Psoas muscle (tissue), 8 donors: ENCODE measurements at regions of chr1 and their contacts with region 1.

Region 1: GRCh38 chr1:151443846-151444782 is 15.2 kb downstream of the POGZ start:
- DNase-seq: no peak
- ATAC-seq: peak; percentile 80 to 92 (median 87)
- H3K4me3 ChIP-seq: no peak overlapping the region
- H3K27ac ChIP-seq: peak overlapping the region; percentile 26
- H3K4me1 ChIP-seq: peaks cover 44% of the 10 kb centered on the region
- H3K27me3 ChIP-seq: no peaks in the 10 kb centered on the region
- CTCF ChIP-seq: peak; percentile 69

Region 2: GRCh38 chr1:151292207-151293030 is 151.7 kb before region 1 on chr1:
- intact Hi-C with region 1: no loop called
- DNase-seq: no peak
- ATAC-seq: peak in 2 of 4 donors; percentile 7 to 9
- H3K4me3 ChIP-seq: no peak overlapping the region
- H3K27ac ChIP-seq: no peak overlapping the region
- H3K4me1 ChIP-seq: no peaks in the 10 kb centered on the region
- H3K27me3 ChIP-seq: no peaks in the 10 kb centered on the region
- CTCF ChIP-seq: no peak

Region 3: DNA sequence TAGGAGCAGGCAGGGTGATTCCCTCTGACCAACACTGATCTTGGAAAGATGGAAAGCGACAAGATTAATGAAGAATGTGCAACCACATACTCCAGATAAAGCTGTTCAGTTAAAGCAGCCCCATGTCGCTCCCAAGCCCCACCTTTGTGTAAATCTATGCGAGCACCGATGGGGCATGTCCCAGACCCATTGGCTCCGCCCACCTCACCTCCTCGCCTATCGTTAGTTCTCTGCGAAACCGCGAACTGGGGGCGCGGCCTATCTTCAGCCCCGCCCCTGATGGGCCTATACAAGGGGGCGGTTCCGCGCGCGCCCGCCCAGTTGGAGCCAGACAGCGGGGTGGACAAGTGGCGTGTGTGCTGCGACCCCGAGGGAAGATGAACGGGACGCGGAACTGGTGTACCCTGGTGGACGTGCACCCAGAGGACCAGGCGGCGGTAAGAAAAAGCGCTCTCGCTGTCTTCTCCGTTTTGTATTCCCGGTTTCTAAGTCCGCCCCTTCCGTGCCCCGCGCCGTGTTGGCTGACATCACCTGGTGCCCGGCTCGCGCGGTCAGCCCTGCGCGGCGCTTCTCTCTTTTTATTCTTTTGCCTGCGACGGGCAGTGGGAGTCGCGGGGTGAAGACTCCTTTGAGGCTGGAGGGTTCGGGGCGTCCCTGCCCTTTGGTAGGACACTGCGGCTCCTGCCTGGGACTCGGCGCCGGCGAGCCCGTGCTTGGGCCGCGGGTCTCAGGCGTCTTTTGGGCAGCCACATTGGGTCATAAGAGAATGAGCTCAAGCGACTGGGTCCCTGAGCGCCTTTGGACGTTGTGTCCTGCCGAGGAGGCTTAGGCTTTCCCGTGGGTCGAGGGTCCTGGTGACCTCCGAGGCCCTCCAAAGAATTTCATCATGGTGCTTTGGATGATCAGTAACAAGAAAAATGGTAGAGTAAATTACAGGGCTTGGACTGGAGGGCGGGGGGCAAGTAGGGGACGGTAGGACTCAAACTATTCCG is 96.2 kb after region 1 on chr1 and contains the start of gene TUFT1:
- intact Hi-C with region 1: loop called in 1 of 2 experiments (anchors 5 kb)
- DNase-seq: peak; percentile 91 to 95
- ATAC-seq: peak; percentile 92 to 97 (median 94)
- H3K4me3 ChIP-seq: peak within 1 kb of the TSS; percentile 90
- H3K27ac ChIP-seq: peak within 1 kb of the TSS; percentile 81
- H3K4me1 ChIP-seq: peaks cover 9% of the 10 kb centered on the region
- H3K27me3 ChIP-seq: no peaks in the 10 kb centered on the region
- CTCF ChIP-seq: no peak
- total RNA-seq, gene TUFT1: 0.97 to 5.3 (median 1.7) TPM

Region 4: GRCh38 chr1:151594143-151594625 is 150.1 kb after region 1 on chr1:
- intact Hi-C with region 1: loop called in 1 of 2 experiments (anchors 10 kb)
- DNase-seq: peak; percentile 72 to 84
- ATAC-seq: peak; percentile 69 to 93 (median 78)
- H3K4me3 ChIP-seq: no peak overlapping the region
- H3K27ac ChIP-seq: no peak overlapping the region
- H3K4me1 ChIP-seq: no peaks in the 10 kb centered on the region
- H3K27me3 ChIP-seq: no peaks in the 10 kb centered on the region
- CTCF ChIP-seq: peak; percentile 94

Region 5: DNA sequence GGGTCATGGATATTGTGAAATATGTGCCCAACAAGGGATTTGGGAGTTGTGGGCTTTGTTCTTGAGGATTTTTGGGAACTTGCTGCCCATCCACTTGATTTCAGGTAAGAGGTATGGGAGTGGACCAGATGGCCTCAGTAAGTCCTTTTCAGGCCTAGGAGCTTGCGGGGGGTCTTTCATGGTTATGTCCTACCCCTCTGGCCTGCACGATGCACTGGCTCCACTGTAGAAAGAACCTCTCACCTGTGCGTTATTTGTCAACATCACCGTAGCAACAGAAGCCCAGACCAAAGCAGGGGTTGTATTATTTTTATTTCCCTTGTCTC is 285.8 kb after region 1 on chr1:
- intact Hi-C with region 1: loop called (anchors 2 to 5 kb)
- DNase-seq: no peak
- ATAC-seq: no peak
- H3K4me3 ChIP-seq: no peak overlapping the region
- H3K27ac ChIP-seq: no peak overlapping the region
- H3K4me1 ChIP-seq: no peaks in the 10 kb centered on the region
- H3K27me3 ChIP-seq: peaks cover 0 to 3% (median 0%) of the 10 kb centered on the region in 3 donors
- CTCF ChIP-seq: no peak

Region 6: DNA sequence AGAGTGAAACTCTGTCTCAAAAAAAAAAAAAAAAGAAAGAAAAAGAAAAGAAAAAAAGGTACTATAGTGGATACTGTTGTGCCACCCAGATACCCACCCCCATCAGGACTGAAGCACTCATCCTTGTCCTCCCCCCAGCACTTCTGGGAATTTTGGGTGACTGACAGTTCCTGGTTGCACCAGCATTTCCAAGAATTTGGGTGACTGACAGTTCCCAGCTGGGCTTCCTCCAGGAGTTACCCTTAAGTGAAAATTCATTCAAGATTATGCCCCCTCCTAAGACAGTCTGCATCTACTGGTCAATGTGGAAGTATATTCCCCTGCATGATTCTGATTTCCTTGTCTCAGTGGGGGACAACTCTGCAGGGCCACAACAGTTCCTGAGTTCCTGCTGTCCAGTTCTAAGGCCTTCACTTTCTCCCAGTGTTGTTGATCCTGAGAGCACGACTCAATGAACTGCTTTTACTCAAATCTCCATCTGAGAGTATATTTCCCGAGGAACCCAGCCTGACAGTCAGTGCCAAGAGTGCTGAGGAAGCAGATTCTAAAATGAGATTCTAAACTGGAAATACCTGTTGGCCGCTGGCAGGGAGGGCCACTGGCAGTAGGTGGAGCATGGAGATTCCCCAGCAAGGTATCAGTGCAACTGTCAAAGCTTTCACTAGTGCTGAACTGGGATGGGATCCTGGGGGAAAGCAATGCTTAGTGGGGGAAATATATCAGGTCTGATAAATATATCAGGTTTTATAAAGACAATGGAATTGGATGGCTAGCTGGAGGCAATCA is 295.7 kb after region 1 on chr1:
- intact Hi-C with region 1: loop called (anchors 2 to 5 kb)
- DNase-seq: no peak
- ATAC-seq: peak in 2 of 4 donors; percentile 23 to 69
- H3K4me3 ChIP-seq: no peak overlapping the region
- H3K27ac ChIP-seq: no peak overlapping the region
- H3K4me1 ChIP-seq: peaks cover 5% of the 10 kb centered on the region
- H3K27me3 ChIP-seq: no peaks in the 10 kb centered on the region
- CTCF ChIP-seq: no peak